Motor neuron (in vitro differentiated cells): ENCODE measurements at regions of chr1 and their contacts with region 1.

Region 1: DNA sequence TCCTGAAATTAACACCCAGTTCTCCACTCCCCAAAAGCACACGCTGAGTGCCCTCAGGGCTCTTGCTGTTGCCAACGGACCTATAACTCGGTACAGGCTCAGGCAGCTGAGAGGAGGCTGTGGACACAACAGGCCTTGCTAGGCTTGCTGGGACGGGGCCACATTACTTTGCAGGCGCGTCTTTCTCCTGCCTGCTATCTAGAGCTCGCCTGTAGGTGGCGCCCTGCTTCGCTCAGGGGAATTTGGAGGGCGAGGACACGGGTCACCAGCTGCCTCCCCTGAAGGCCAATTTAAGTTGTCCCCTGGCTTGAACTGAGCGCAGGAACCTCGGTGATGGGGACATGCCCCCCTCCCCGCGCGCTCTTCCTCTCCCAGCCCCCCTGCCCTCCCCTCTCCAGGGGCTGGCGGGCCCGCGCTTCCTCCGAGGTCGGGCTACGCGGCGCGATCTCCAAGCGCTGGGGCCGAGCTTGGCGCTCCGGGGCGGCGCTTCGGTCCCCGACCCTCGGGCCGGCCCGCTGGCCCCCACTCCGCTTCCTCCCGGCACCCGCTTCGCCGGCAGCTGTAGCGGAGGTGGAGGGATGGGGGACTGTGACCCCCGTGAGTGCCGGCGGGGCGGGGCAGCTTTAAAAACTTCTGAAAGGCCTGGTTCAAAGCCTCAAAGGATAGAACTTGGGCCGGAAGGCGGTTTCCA is 32.4 kb upstream of the NFIA start:
- ATAC-seq: peak; percentile 69 to 88 (median 84)
- H3K4me3 ChIP-seq: peak overlapping the region; percentile 51 to 89 (median 70)
- H3K27ac ChIP-seq: peak overlapping the region in 1 of 2 donors; percentile 3
- H3K4me1 ChIP-seq: peaks cover 9 to 18% of the 10 kb centered on the region in 2 donors

Region 2: GRCh38 chr1:59971464-59971911 is 1078.5 kb before region 1 on chr1:
- in situ Hi-C with region 1: loop called in 2 of 9 experiments (anchors 25 kb)
- ATAC-seq: peak; percentile 82 to 96 (median 94)
- H3K4me3 ChIP-seq: peak overlapping the region in 1 of 5 donors; percentile 9
- H3K27ac ChIP-seq: no peak overlapping the region
- H3K4me1 ChIP-seq: peaks cover 2 to 18% of the 10 kb centered on the region in 2 donors

Region 3: DNA sequence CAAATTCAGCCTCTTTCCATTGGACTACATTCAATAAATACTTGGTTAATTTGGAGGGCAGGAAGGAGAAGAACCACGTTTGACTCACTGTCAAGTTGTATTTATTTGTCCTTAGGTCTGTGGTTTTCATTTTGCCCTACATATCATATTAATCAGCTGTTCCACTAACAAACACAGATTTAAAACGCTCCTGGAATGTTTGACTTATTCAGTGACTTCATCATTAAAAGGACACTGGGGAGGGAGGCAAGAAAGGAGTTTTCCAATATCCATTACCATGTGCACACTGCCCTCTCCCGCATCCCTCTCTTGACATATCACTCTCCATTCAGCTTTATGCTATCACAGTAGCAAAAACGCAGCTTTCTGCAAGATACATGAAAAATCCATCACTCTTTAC is 878.2 kb before region 1 on chr1:
- in situ Hi-C with region 1: loop called in 1 of 9 experiments (anchors 25 kb)
- ATAC-seq: peak in 5 of 8 experiments; percentile 45 to 84 (median 62)
- H3K4me3 ChIP-seq: no peak overlapping the region
- H3K27ac ChIP-seq: no peak overlapping the region
- H3K4me1 ChIP-seq: peaks cover 0 to 14% of the 10 kb centered on the region in 2 donors

Region 4: GRCh38 chr1:60874716-60875115 is 175.3 kb before region 1 on chr1:
- in situ Hi-C with region 1: loop called in 2 of 9 experiments (anchors 25 kb)
- ATAC-seq: peak in 7 of 8 experiments; percentile 41 to 93 (median 59)
- H3K4me3 ChIP-seq: no peak overlapping the region
- H3K27ac ChIP-seq: no peak overlapping the region
- H3K4me1 ChIP-seq: peaks cover 0 to 4% of the 10 kb centered on the region in 2 donors

Region 5: GRCh38 chr1:61337981-61338848 is 288.2 kb after region 1 on chr1:
- in situ Hi-C with region 1: loop called in 1 of 9 experiments (anchors 25 kb)
- ATAC-seq: peak; percentile 92 to 99 (median 96)
- H3K4me3 ChIP-seq: no peak overlapping the region
- H3K27ac ChIP-seq: peak overlapping the region in 1 of 2 donors; percentile 22
- H3K4me1 ChIP-seq: peaks cover 22% of the 10 kb centered on the region in 2 donors

Region 6: DNA sequence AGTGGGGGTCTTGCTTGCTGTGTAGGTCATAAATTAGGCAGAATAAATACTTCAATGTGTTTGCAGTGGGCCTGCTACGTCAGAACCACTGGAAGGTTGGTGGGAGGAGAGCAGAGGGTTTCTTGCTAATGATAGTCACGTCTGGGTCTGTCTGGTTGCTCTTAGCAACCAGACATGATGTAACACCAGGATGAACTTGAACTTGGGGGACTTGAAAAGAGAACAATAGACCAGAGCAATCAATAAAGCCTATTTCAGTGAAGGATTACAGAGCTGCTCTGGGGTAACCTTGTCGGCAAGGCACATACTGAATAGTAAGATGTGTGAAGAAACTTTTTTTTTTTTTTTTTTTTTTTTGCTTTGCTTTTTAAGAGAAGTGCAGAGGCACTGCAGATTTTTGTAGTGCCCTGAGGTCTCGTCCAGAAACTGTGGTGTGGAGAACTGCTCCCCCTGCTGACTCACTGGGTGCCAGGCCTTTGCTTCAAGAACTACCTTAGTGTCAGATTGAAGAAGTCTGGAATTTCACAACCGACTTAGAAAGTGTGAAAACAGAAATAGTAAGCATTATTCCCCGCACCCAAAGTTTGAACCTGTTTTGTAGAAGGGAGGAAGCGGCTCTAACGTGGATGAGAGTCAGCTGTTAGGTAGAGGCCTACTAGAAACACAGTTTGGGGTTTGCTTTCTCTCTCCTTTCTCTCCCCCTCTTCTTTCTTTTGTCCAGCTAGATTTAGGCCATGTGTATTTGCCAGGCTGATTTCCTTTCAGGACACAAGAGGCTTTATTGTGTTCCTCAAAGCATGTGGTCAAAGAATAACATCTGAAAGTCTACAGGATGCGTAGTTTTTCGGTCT is 403.3 kb after region 1 on chr1:
- in situ Hi-C with region 1: loop called in 2 of 9 experiments (anchors 25 kb)
- ATAC-seq: peak; percentile 92 to 99 (median 95)
- H3K4me3 ChIP-seq: no peak overlapping the region
- H3K27ac ChIP-seq: peak overlapping the region in 1 of 2 donors; percentile 59
- H3K4me1 ChIP-seq: peaks cover 31 to 40% of the 10 kb centered on the region in 2 donors